PC-3 (cell line): ENCODE measurements at regions of chr7 and their contacts with region 1.

Region 1: DNA sequence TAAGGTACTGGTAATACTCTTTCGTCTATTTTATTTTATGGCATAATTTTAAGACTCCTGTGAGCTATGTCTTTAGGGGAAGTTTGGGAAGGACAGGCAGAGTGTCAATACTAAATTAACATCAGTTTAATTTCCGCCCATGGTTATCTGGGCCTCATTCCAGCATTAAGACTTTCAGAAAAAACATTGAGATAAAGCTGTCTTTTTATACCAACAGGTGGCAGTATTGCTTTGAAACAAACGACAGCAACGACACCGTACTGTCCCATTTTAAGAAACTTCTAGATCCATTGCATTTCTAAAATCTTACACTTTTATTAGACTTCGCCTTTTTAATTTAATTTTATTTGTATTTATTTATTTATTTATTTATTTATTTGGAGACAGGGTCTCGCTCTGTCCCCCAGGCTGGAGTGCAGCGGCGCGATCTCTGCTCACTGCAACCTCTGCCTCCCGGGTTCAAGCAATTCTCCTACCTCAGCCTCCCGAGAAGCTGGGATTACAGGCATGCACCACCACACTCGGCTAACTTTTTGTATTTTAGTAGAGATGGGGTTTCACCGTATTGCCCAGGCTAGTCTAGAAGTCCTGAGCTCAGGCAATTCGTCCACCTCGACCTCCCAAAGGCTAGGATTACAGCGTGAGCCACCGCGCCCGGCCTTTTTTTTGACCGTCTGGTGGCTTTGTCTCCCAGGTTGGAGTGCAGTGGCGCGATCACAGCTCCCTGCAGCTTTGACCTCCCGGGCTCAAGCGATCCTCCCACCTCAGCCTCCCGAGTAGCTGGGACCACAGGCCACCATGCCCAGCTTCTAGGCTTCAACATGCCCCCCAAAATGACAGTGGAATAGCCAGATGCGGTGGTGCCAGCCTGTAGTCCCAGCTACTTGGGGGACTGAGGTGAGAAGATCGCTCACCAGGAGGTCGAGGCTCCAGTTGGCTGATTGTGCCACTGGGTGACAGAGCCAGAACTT is 78.7 kb upstream of the C1GALT1 start:
- DNase-seq: peak; percentile 81
- ATAC-seq: peak; percentile 58
- H3K4me3 ChIP-seq: peak overlapping the region; percentile 49
- H3K27ac ChIP-seq: no peak overlapping the region
- H3K4me1 ChIP-seq: peaks cover 17% of the 10 kb centered on the region
- H3K27me3 ChIP-seq: no peaks in the 10 kb centered on the region
- CTCF ChIP-seq: peak; percentile 68

Region 2: GRCh38 chr7:7014827-7015610 is 88.6 kb before region 1 on chr7:
- CTCF ChIA-PET with region 1: interaction called, 4 read pairs
- POLR2A ChIA-PET with region 1: interaction called, 4 read pairs
- intact Hi-C with region 1: loop called (anchors 1 kb)
- DNase-seq: peak; percentile 92
- ATAC-seq: peak; percentile 52
- H3K4me3 ChIP-seq: peak overlapping the region; percentile 52; the same call in 1 of the 2 replicates
- H3K27ac ChIP-seq: peak overlapping the region; percentile 82
- H3K4me1 ChIP-seq: peaks cover 57% of the 10 kb centered on the region
- H3K27me3 ChIP-seq: no peaks in the 10 kb centered on the region
- CTCF ChIP-seq: no peak

Region 3: DNA sequence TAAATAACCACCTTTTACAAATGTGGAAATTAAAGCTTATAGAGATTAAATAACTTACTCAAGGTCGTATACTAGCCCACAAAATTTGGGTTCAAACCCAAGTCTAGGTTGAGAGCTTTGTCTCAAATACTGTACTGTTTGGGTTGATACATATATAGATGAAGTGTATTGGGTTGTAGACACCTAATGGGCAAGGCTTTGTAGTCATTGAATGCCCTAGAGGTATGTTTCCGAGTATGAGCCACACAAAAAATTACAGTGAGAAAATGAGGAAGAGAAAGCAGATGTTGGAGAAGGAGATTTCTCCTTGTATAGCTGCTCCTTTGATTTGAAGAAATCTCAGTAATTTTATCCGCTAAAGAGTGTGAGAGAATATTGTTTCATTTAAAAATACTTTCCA is 139.3 kb after region 1 on chr7:
- CTCF ChIA-PET with region 1: no interaction called
- POLR2A ChIA-PET with region 1: no interaction called
- intact Hi-C with region 1: loop called (anchors 10 kb)
- DNase-seq: no peak
- ATAC-seq: no peak
- H3K4me3 ChIP-seq: no peak overlapping the region
- H3K27ac ChIP-seq: no peak overlapping the region
- H3K4me1 ChIP-seq: peaks cover 8% of the 10 kb centered on the region
- H3K27me3 ChIP-seq: no peaks in the 10 kb centered on the region
- CTCF ChIP-seq: no peak

Region 4: DNA sequence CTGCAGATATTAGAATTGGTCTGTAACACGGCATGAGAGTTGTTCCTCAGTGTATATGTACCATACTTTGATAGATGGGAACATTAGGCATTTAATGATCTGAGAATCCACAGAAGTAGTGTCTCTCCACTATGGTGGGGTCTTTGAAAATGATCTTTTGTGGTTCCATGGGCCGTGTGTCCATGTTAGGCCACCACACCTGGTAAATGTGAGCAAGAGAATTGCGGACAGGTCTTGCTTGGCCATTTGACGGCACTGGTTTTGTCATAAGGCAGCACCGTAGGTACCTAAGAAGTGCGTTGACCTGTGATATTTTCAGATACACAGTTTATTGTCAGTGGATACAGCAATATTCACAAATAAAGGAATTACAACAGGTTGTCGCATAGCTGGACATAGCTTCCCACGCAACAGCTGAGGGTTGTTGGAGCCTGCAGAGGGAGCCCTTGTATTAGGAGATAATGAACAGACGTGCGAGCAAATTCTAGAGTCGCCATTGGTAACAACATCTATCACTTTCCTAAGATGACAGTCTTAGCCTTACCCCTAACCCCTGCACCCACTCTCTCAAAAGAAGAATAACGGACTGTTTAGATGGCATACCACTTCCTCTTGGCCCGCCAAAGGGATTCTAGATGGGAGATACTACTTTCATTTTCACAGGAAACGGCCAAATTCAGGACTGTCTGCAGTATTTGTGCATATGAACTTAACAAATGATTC is 320.7 kb after region 1 on chr7:
- CTCF ChIA-PET with region 1: interaction called, 15 read pairs
- POLR2A ChIA-PET with region 1: no interaction called
- intact Hi-C with region 1: loop called (anchors 1 kb)
- DNase-seq: peak; percentile 81
- ATAC-seq: peak; percentile 95
- H3K4me3 ChIP-seq: peak overlapping the region; percentile 65
- H3K27ac ChIP-seq: no peak overlapping the region
- H3K4me1 ChIP-seq: peaks cover 8% of the 10 kb centered on the region; the same call in 1 of the 2 replicates
- H3K27me3 ChIP-seq: no peaks in the 10 kb centered on the region
- CTCF ChIP-seq: peak; percentile 94

Region 5: GRCh38 chr7:7539711-7540110 is 436.1 kb after region 1 on chr7:
- CTCF ChIA-PET with region 1: no interaction called
- POLR2A ChIA-PET with region 1: no interaction called
- intact Hi-C with region 1: loop called (anchors 2 kb)
- DNase-seq: no peak
- ATAC-seq: no peak
- H3K4me3 ChIP-seq: no peak overlapping the region
- H3K27ac ChIP-seq: no peak overlapping the region
- H3K4me1 ChIP-seq: peaks cover 6% of the 10 kb centered on the region; the same call in 1 of the 2 replicates
- H3K27me3 ChIP-seq: no peaks in the 10 kb centered on the region
- CTCF ChIP-seq: no peak

Region 6: DNA sequence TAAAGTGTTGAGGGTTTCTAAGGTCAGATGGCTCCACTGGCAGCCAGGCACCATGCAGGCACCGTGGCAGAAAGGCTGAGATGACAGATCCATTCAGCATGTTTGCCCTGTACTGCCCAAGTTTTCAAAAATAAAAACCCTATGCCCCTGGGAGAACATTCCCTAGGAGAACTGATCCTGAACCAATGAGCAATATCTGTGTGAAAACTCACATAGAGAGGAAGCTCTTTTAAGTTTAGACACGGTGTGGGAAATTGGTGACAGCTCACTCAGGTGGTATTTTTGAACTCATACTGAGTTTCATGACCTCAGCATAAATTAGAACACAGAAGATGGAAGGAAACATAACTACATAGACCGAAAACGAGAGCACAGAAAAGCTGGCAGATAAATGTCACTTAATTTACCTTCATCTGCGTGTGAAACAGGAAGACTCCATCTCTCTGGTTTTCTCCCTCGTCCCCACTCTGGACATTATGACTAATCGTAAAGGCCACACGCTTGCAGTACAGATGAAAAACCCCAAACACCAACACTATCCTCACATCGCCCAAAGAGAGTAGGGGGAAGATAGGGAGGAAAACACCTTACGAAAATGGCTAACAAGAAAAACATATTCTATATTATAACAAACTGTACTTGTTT is 1030.6 kb after region 1 on chr7:
- CTCF ChIA-PET with region 1: no interaction called
- POLR2A ChIA-PET with region 1: no interaction called
- intact Hi-C with region 1: no loop called
- DNase-seq: peak; percentile 12
- ATAC-seq: no peak
- H3K4me3 ChIP-seq: no peak overlapping the region
- H3K27ac ChIP-seq: no peak overlapping the region
- H3K4me1 ChIP-seq: no peaks in the 10 kb centered on the region
- H3K27me3 ChIP-seq: no peaks in the 10 kb centered on the region
- CTCF ChIP-seq: no peak